Naive thymus-derived CD4-positive, alpha-beta T cell (primary cell): ENCODE measurements at regions of chr18 and their contacts with region 1.

Region 1: DNA sequence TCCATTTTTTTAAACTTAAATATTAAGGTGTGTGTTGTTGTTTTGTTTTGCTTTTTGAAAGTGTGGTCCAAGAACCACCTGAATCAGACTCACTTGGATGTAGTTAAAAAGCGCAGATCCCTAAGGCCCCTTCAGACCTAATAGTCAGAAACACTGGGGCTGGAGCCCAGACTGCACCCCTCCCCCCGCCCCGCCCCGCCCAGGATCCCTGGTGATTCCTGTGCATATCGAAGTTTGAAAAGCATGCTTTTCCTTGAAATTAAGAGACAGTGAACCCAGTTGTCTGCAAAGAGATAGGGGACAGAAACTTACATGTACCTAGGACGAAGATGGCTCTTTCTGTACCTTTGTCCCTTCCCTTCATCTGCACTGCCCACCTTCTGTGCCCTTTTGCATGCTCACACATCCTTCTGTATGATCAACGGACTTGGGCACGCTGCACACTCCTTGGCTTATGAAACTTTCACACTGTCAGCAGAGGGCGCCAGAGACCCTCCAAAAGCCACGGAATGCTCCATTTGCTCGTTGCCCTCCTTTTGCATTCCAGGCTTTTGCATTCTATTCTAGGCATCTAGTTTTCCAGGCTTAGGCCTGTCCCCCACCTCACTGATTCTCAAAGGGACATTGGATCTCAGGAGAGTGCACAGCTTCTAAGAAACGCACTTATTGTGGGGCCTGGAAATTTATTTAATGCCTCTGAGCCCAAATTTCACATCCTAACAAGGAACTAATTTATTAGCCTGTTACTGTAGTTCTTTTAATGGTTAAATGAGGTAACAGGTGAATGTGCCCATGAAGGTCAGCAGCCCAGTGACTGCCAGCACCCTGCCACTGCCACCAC is 32.8 kb upstream of the SLC14A1 start:
- DNase-seq: peak; percentile 42 to 80 (median 70)
- ATAC-seq: peak; percentile 30
- H3K4me3 ChIP-seq: no peak overlapping the region
- H3K4me3 Mint-ChIP-seq: peak overlapping the region in 3 of 10 donors; percentile 19 to 60 (median 31)
- H3K27ac ChIP-seq: no peak overlapping the region
- H3K27ac Mint-ChIP-seq: peak overlapping the region in 2 of 9 donors; percentile 14 to 15
- H3K4me1 ChIP-seq: peaks cover 38 to 42% of the 10 kb centered on the region in 2 donors
- H3K4me1 Mint-ChIP-seq: peaks cover 29 to 53% (median 43%) of the 10 kb centered on the region in 7 donors
- H3K27me3 ChIP-seq: no peaks in the 10 kb centered on the region
- H3K27me3 Mint-ChIP-seq: peaks cover 0 to 58% (median 5%) of the 10 kb centered on the region in 5 donors

Region 2: DNA sequence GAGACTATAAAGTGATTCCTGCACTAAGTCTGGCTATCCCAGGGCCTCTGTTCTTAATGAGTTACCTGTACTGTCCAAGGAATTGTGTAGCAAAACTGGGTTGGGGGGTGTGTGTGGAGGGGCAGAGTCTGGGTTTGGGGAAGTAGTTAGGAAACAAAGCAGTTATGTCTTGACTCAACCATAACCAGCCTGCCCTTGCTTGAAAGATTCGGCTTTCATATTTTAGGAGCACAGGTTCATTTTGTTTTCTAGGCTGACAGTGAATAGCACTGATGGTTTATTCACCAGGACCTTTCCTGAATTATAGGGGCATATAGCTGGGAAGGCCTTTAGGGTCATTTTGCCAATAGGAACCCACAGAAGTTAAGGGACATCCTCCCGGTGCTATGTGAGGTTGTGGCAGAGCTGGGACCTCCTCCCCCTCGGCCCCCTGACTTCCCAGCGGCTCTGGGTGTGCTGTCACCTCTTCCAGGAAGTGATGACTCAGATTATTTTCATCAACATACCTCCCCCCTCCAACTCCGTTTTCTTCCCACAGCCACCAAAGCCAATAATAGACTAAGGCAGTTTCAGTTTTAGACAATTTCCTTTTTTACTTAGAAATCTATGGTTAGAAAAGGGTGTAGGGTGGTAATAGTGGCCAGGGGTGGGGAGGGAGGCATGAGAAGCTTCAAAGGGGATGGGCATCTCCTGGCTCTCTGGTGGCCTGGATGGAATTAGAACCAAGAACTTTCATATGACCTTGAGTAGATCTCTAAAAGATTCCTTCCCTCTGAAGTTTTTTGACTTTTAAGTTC is 965.7 kb before region 1 on chr18:
- CTCF ChIA-PET with region 1: no interaction called
- POLR2A ChIA-PET with region 1: no interaction called
- intact Hi-C with region 1: loop called in 1 of 2 experiments (anchors 10 kb)
- DNase-seq: peak in 2 of 9 donors; percentile 11 to 69
- ATAC-seq: peak; percentile 79
- H3K4me3 ChIP-seq: peak overlapping the region; percentile 15
- H3K4me3 Mint-ChIP-seq: peak overlapping the region; percentile 19 to 68 (median 43)
- H3K27ac ChIP-seq: no peak overlapping the region
- H3K27ac Mint-ChIP-seq: peak overlapping the region; percentile 3 to 86 (median 72)
- H3K4me1 ChIP-seq: peaks cover 0 to 67% of the 10 kb centered on the region in 2 donors
- H3K4me1 Mint-ChIP-seq: peaks cover 30 to 89% (median 49%) of the 10 kb centered on the region in 7 donors
- H3K27me3 ChIP-seq: no peaks in the 10 kb centered on the region
- H3K27me3 Mint-ChIP-seq: peaks cover 0 to 16% (median 0%) of the 10 kb centered on the region in 5 donors

Region 3: GRCh38 chr18:45526114-45526841 is 164.9 kb before region 1 on chr18:
- CTCF ChIA-PET with region 1: no interaction called
- POLR2A ChIA-PET with region 1: no interaction called
- intact Hi-C with region 1: no loop called
- DNase-seq: no peak
- ATAC-seq: no peak
- H3K4me3 ChIP-seq: no peak overlapping the region
- H3K4me3 Mint-ChIP-seq: no peak overlapping the region
- H3K27ac ChIP-seq: no peak overlapping the region
- H3K27ac Mint-ChIP-seq: no peak overlapping the region
- H3K4me1 ChIP-seq: no peaks in the 10 kb centered on the region
- H3K4me1 Mint-ChIP-seq: peaks cover 0 to 2% (median 0%) of the 10 kb centered on the region in 7 donors
- H3K27me3 ChIP-seq: no peaks in the 10 kb centered on the region
- H3K27me3 Mint-ChIP-seq: peaks cover 3 to 17% (median 14%) of the 10 kb centered on the region in 5 donors

Region 4: DNA sequence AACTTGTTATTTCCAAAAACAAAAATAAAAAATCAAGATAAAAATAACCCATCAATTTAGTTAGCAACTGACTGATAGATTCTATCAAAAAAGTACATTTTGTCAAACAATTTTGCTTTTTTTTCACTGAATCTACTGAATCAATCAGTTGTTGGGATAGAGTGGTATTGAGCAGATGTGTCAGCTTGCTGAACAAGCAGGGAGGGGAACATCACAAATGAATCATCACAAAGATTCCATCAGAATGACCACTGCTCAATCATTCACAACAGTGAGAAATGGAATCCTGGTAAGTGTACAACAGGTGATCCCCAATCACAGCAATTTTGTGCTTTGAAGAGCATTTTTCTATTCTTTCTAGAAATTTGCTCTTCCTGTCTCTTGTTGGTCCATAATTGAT is 88.3 kb before region 1 on chr18:
- CTCF ChIA-PET with region 1: no interaction called
- POLR2A ChIA-PET with region 1: no interaction called
- intact Hi-C with region 1: no loop called
- DNase-seq: no peak
- ATAC-seq: no peak
- H3K4me3 ChIP-seq: no peak overlapping the region
- H3K4me3 Mint-ChIP-seq: no peak overlapping the region
- H3K27ac ChIP-seq: no peak overlapping the region
- H3K27ac Mint-ChIP-seq: no peak overlapping the region
- H3K4me1 ChIP-seq: no peaks in the 10 kb centered on the region
- H3K4me1 Mint-ChIP-seq: no peaks in the 10 kb centered on the region
- H3K27me3 ChIP-seq: no peaks in the 10 kb centered on the region
- H3K27me3 Mint-ChIP-seq: peaks cover 6 to 23% (median 16%) of the 10 kb centered on the region in 5 donors

Region 5: GRCh38 chr18:45670281-45670962 is 20.8 kb before region 1 on chr18:
- CTCF ChIA-PET with region 1: interaction called, 102 read pairs
- POLR2A ChIA-PET with region 1: interaction called, 120 read pairs
- intact Hi-C with region 1: loop called (anchors 1 kb)
- DNase-seq: peak in 4 of 9 donors; percentile 37 to 59 (median 44)
- ATAC-seq: peak; percentile 82
- H3K4me3 ChIP-seq: no peak overlapping the region
- H3K4me3 Mint-ChIP-seq: peak overlapping the region in 8 of 10 donors; percentile 56 to 78 (median 70)
- H3K27ac ChIP-seq: no peak overlapping the region
- H3K27ac Mint-ChIP-seq: peak overlapping the region in 8 of 9 donors; percentile 28 to 88 (median 82)
- H3K4me1 ChIP-seq: peaks cover 35 to 47% of the 10 kb centered on the region in 2 donors
- H3K4me1 Mint-ChIP-seq: peaks cover 30 to 66% (median 58%) of the 10 kb centered on the region in 7 donors
- H3K27me3 ChIP-seq: no peaks in the 10 kb centered on the region
- H3K27me3 Mint-ChIP-seq: peaks cover 0 to 39% (median 0%) of the 10 kb centered on the region in 5 donors

Region 6: GRCh38 chr18:45839414-45840395 is 148.5 kb after region 1 on chr18:
- CTCF ChIA-PET with region 1: no interaction called
- POLR2A ChIA-PET with region 1: no interaction called
- intact Hi-C with region 1: loop called in 1 of 2 experiments (anchors 1 kb)
- DNase-seq: peak in 4 of 9 donors; percentile 20 to 36 (median 34)
- ATAC-seq: peak; percentile 62
- H3K4me3 ChIP-seq: no peak overlapping the region
- H3K4me3 Mint-ChIP-seq: peak overlapping the region in 5 of 10 donors; percentile 32 to 48 (median 36)
- H3K27ac ChIP-seq: no peak overlapping the region
- H3K27ac Mint-ChIP-seq: no peak overlapping the region
- H3K4me1 ChIP-seq: no peaks in the 10 kb centered on the region
- H3K4me1 Mint-ChIP-seq: peaks cover 5 to 21% (median 10%) of the 10 kb centered on the region in 7 donors
- H3K27me3 ChIP-seq: peaks cover 0 to 4% of the 10 kb centered on the region in 2 donors
- H3K27me3 Mint-ChIP-seq: peaks cover 30 to 56% (median 40%) of the 10 kb centered on the region in 5 donors

Region 7: GRCh38 chr18:45910405-45911023 is 219.3 kb after region 1 on chr18:
- CTCF ChIA-PET with region 1: interaction called, 5 read pairs
- POLR2A ChIA-PET with region 1: no interaction called
- intact Hi-C with region 1: loop called (anchors 1 kb)
- DNase-seq: peak; percentile 16 to 68 (median 57)
- ATAC-seq: peak; percentile 83
- H3K4me3 ChIP-seq: no peak overlapping the region
- H3K4me3 Mint-ChIP-seq: no peak overlapping the region
- H3K27ac ChIP-seq: no peak overlapping the region
- H3K27ac Mint-ChIP-seq: no peak overlapping the region
- H3K4me1 ChIP-seq: no peaks in the 10 kb centered on the region
- H3K4me1 Mint-ChIP-seq: peaks cover 0 to 5% (median 2%) of the 10 kb centered on the region in 7 donors
- H3K27me3 ChIP-seq: no peaks in the 10 kb centered on the region
- H3K27me3 Mint-ChIP-seq: no peaks in the 10 kb centered on the region

Region 8: GRCh38 chr18:46097801-46098615 is 406.8 kb after region 1 on chr18 and contains the start of gene ATP5F1A:
- CTCF ChIA-PET with region 1: no interaction called
- POLR2A ChIA-PET with region 1: no interaction called
- intact Hi-C with region 1: loop called in 1 of 2 experiments (anchors 1 kb)
- DNase-seq: peak; percentile 69 to 86 (median 80)
- ATAC-seq: peak; percentile 94
- H3K4me3 ChIP-seq: peak within 1 kb of the TSS; percentile 92
- H3K4me3 Mint-ChIP-seq: peak within 1 kb of the TSS; percentile 92 to 99 (median 96)
- H3K27ac ChIP-seq: peak within 1 kb of the TSS; percentile 94
- H3K27ac Mint-ChIP-seq: peak within 1 kb of the TSS; percentile 94 to 99 (median 97)
- H3K4me1 ChIP-seq: peaks cover 18 to 32% of the 10 kb centered on the region in 2 donors
- H3K4me1 Mint-ChIP-seq: peaks cover 18 to 43% (median 35%) of the 10 kb centered on the region in 7 donors
- H3K27me3 ChIP-seq: no peaks in the 10 kb centered on the region
- H3K27me3 Mint-ChIP-seq: peaks cover 0 to 2% (median 0%) of the 10 kb centered on the region in 5 donors
- total RNA-seq, gene ATP5F1A: 181 to 311 (median 212) TPM